Left cardiac atrium (tissue), 4 donors: ENCODE measurements at regions of chr9 and their contacts with region 1.

Region 1: GRCh38 chr9:115591584-115591984 is 473.6 kb upstream of the TNC start:
- DNase-seq: peak; percentile 62
- ATAC-seq: peak; percentile 88 to 92

Region 2: GRCh38 chr9:115373000-115373709 is 218.4 kb before region 1 on chr9:
- intact Hi-C with region 1: no loop called
- DNase-seq: no peak
- ATAC-seq: peak in 1 of 2 donors; percentile 60

Region 3: DNA sequence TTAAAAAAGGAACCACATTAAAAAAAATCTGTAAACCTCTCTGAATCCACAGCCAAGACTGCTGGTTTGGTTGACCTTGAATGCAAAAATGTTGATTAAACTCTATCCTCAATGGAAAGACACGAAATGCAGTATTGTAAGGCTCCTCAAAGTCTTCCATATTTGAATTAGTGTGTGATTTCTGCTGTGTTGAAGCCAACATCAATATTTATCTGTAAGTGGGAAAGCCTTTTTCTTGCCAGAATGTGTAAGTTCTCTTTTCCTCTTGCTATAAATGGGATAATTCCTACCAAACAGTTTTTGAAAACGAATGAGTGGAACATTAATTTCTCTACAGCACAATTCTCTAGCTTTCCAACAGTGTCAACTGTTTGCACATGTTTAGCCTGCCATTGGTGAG is 51.5 kb before region 1 on chr9:
- intact Hi-C with region 1: no loop called
- DNase-seq: no peak
- ATAC-seq: no peak

Region 4: DNA sequence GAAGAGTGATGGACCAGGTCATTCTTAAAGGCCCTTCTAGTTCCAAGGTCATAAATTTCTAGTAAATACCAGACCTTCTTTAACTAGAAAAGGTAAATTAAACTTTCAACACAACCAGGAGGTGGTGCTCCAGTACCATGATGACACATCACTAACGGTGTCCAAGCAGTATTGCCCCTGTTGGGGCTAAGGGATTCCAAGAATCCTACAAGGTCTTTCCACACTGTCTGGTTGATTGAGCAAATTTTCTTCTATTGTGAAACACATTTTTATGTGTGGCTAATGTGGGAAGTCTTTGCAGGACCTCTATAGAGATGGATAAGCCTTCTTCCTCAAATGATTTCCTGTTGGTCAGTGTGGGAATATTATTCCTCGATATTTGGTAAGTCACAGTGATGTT is 102.4 kb after region 1 on chr9:
- intact Hi-C with region 1: loop called in 1 of 2 experiments (anchors 10 kb)
- DNase-seq: no peak
- ATAC-seq: peak; percentile 70 to 91

Region 5: DNA sequence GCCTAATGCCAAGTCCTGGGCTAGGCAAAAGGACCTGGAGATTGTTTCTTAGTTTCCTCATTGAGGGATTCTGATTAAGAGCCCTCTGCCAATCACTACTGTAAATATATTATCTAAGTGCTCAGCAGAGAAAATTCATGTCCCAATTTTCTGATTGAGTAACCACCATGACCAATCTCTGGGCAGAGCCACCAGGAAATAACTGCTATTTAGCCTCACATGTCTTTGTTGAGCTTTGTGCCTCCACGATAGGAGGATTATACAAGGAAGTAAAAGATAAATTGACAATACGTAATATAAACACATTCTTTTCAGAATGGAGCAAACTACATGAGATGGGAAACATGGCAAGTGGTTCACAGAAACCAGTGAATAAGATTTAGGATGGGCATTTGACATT is 165.9 kb after region 1 on chr9:
- intact Hi-C with region 1: no loop called
- DNase-seq: no peak
- ATAC-seq: no peak

Region 6: DNA sequence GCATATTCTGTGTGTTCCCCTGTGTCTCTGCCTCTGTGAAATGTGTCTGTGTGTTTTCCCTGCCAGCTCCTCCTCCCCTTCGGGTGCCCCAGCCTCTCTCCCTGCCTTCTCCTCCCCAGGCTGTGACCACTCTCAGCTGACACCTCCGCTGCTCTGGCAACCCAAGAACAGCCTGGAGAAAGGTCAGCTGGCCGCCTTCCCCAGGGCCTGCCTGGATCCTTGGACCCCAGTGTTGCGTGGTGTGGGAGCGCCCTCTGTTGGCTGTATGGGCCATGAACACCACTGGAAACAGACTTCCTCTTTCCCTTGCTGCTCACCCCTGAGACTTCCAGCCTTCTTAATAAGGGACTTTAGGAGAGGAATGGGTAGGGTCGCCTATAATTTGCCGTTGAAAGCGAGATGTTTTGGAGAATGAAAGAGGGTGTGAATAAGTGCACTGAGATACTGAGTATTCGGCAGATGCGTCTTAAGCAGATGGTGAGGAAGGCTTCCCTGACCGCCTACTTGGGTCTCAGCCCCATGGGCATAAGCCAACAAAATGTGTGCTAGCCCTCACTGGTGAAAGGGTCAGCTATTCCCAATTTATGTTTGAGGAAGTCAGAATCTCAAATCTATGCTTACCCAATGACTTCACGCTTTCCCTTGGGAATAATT is 980.6 kb after region 1 on chr9:
- intact Hi-C with region 1: loop called in 1 of 2 experiments (anchors 5 kb)
- DNase-seq: peak; percentile 93
- ATAC-seq: peak; percentile 97 to 99

Region 7: GRCh38 chr9:116661037-116661954 is 1069.7 kb after region 1 on chr9:
- intact Hi-C with region 1: loop called (anchors 5 to 10 kb)
- DNase-seq: no peak
- ATAC-seq: peak; percentile 81 to 87